GM12878 (cell line): ENCODE measurements at regions of chr17 and their contacts with region 1.

Region 1: DNA sequence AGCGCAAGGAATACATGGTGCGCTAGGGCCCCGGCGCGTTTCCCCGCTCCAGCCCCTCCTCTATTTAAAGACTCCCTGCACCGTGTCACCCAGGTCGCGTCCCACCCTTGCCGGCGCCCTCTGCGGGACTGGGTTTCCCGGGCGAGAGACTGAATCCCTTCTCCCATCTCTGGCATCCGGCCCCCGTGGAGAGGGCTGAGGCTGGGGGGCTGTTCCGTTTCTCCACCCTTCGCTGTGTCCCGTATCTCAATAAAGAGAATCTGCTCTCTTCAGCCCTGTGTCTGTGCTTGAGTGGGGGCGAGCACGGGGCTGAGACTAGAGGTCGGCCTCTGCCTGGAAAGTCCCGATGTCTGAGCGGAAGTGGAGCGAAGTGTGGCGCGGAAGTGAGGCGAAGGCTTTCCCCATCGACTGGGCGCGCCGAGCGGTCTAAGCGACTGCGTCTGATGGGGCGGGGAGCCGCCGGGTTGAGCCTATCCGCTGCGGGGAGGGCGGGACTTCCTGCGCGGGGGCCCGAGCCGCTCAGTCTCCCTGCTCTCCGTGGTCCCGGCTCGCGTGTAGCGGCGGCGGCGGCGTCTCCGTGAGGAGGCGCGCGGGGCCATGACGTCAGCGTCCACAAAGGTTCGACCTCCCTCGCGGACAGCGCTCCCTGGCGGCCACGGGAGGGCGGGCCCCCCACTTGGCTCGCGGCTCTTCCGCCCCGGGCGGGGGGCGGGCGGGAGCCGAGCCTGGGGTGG is 2.0 kb downstream of the RNASEK start:
- DNase-seq: peak; percentile 86
- ATAC-seq: peak; percentile 89
- H3K4me3 ChIP-seq: peak overlapping the region; percentile 100
- H3K27ac ChIP-seq: peak overlapping the region; percentile 100
- H3K4me1 ChIP-seq: peaks cover 34% of the 10 kb centered on the region
- H3K27me3 ChIP-seq: no peaks in the 10 kb centered on the region
- CTCF ChIP-seq: peak; percentile 46 to 67 (median 60); a peak in 5 of 6 replicates
- EP300 ChIP-seq: peak; percentile 26 to 46; a peak in 2 of 4 replicates
- POLR2A ChIP-seq: peak; percentile 84
- RAD21 ChIP-seq: no peak

Region 2: DNA sequence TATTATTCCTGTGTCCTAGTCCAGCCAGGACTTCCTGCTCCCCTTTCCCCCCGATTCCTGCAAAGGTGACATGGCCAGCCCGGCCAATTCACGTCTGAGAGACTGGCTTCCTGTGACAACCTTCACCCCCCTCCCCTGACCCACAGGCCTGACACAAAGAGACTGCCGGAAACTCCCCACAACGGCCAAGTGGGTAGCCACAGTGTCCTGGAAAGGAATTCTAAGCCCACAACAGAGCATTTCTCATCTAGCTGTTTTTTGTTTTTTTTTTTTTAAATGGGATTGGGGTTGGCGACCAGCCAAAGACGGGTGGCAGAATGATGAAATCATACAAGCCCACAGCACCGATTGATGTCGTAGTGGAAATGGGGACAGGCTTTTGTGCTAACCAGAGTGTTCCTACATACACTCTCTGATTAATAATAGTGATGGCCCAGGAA is 261.4 kb before region 1 on chr17:
- CTCF ChIA-PET with region 1: interaction called, 4 read pairs
- POLR2A ChIA-PET with region 1: no interaction called
- RAD21 ChIA-PET with region 1: no interaction called
- SMC1A ChIA-PET with region 1: no interaction called
- in situ Hi-C with region 1: no loop called
- intact Hi-C with region 1: loop called (anchors 10 kb)
- DNase-seq: no peak
- ATAC-seq: peak; percentile 11; the same call in 1 of the 3 replicates
- H3K4me3 ChIP-seq: no peak overlapping the region
- H3K27ac ChIP-seq: peak overlapping the region; percentile 15; the same call in 1 of the 2 replicates
- H3K4me1 ChIP-seq: peaks cover 15% of the 10 kb centered on the region
- H3K27me3 ChIP-seq: no peaks in the 10 kb centered on the region
- CTCF ChIP-seq: no peak
- EP300 ChIP-seq: no peak
- POLR2A ChIP-seq: no peak
- RAD21 ChIP-seq: no peak

Region 3: DNA sequence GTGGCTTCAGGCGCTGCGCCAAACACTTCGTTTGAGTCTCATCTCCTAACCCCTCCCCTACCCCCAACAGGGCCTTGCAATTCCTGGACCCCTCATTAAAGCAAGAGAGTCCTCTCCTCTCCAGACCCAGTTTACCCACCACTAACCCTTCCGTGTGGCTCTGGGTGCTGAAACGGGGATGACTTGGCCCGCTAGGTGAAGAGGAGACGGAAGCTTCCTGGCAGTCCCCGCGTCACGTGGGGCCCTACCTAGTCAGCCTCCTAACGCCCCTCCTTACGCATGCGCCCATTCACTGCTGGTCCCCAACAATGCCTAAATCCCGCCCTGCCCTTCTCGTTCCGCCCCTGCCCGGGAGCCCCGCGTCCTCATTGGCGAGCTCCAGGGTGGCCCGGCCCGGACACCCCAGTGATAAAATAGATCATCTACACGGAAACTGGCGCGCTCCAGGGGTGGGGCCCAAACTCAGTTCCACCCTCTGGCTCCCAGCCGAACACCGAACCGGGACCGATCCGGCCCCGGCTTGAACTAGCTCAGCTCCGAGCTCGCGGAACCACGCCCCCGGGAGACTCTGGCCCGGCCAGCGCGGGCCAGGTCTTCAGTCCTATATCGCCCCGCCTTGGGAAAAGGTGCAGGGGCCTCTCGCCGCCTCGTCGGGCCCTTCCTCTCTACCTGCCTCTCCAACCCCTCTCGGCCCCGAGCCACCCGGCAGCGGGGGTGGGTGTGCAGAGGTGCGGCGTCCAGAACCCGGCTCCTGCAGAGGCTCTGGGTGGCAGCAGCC is 21.4 kb after region 1 on chr17 and contains the start of gene SLC16A13:
- CTCF ChIA-PET with region 1: interaction called, 6 read pairs
- POLR2A ChIA-PET with region 1: interaction called, 18 read pairs
- RAD21 ChIA-PET with region 1: interaction called, 8 read pairs
- SMC1A ChIA-PET with region 1: interaction called, 3 read pairs
- in situ Hi-C with region 1: no loop called
- intact Hi-C with region 1: no loop called
- DNase-seq: peak; percentile 96
- ATAC-seq: peak; percentile 96
- H3K4me3 ChIP-seq: peak within 1 kb of the TSS; percentile 77
- H3K27ac ChIP-seq: peak within 1 kb of the TSS; percentile 99
- H3K4me1 ChIP-seq: peaks cover 10% of the 10 kb centered on the region
- H3K27me3 ChIP-seq: no peaks in the 10 kb centered on the region
- CTCF ChIP-seq: no peak
- EP300 ChIP-seq: peak in 1 of 2 experiments; percentile 27; a peak in 1 of 4 replicates
- POLR2A ChIP-seq: peak; percentile 95
- RAD21 ChIP-seq: no peak
- polyA plus RNA-seq, gene SLC16A13: 0.34 to 0.46 TPM

Region 4: DNA sequence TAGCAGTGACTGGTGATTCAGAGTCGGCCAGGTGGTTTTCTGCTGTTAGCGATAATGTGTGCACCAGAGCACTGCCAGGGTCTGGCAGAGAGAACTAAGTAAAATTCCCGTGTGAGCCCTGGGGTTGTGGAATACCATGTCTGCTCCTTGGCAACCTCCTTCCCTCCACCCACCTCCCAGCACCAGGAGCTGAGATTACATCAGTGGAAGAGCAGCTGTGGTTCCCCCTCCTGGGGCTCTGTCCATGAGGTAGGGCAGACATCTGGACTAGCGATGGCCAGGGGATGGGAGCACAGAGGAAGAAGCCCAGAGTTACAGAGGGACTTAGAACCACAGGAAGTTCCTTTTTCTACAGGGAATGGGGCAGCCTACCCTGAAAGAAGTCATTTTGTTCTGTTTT is 49.8 kb after region 1 on chr17:
- CTCF ChIA-PET with region 1: no interaction called
- POLR2A ChIA-PET with region 1: no interaction called
- RAD21 ChIA-PET with region 1: no interaction called
- SMC1A ChIA-PET with region 1: no interaction called
- in situ Hi-C with region 1: no loop called
- intact Hi-C with region 1: no loop called
- DNase-seq: no peak
- ATAC-seq: no peak
- H3K4me3 ChIP-seq: no peak overlapping the region
- H3K27ac ChIP-seq: no peak overlapping the region
- H3K4me1 ChIP-seq: no peaks in the 10 kb centered on the region
- H3K27me3 ChIP-seq: no peaks in the 10 kb centered on the region
- CTCF ChIP-seq: no peak
- EP300 ChIP-seq: no peak
- POLR2A ChIP-seq: no peak
- RAD21 ChIP-seq: no peak